Posterior vena cava (tissue), 2 donors: ENCODE measurements at regions of chr11 and their contacts with region 1.

Region 1: GRCh38 chr11:95908826-95909225 is 15.1 kb downstream of the MTMR2 start:
- DNase-seq: no peak

Region 2: GRCh38 chr11:95948637-95949036 is 39.8 kb after region 1 on chr11:
- intact Hi-C with region 1: loop called in 1 of 2 experiments (anchors 2 kb)
- DNase-seq: no peak